ENCODE measurements at regions of chr10 and their contacts with region 1.

Region 1: DNA sequence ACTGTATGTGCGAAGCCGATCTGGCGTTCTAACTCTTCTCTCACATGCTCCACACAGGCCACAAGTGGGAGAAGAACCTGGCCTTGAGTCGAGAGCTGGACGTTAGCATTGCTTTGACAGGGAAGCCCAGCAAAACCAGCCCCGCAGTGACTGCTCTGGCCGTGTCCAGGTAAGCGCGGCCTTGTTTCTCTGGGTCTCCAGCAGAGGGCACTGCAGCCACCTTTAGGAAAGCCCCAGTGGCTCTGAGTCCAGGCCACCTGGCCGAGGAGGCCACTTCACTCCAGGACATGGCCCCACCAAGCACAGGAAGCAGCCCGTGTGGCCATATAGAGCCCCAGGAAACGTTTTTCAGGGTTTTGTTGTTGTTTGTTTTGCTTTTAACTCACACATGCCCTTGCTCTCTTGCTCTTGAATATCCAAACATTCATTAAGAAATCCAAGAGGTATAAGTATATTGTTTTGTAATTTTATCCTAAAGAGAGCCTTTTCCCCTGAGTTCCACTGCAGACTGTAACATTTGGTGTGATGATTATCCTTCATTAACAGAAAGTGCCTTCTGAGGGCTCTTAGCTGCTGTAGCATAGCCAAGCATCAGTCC is 41.8 kb upstream of the LRRC18 start:
- DNase-seq: peak; percentile 83

Region 2: DNA sequence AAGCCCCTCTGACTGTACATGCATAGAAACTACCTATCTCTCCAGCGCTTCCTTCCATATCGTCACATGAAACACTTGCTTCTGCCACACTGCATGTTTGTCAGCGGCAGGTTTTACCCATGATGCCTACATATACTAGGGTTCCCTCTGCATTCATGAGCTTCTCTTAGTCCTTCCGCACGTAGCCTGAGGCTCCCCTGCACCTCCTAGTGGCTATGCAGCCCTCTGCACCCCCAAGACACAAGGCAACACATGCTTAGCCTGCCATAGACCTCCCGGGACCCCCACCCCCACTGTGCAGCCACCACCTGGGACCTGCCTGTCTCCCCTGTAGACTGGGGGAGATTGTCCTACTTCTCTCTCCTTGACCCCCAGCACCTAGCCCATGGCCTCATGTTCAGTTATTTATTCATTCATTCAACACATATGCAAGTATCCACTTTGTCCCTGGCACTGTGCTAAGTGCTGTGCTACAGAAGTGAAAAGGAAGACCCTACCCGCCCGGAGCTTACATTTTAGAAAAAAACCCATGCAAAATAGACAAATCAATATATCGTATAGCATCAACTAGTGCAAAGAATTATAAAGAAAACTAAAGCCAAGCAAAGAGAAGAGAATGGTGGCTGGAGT is 183.3 kb after region 1 on chr10:
- intact Hi-C with region 1: loop called (anchors 2 kb)
- DNase-seq: no peak

Region 3: DNA sequence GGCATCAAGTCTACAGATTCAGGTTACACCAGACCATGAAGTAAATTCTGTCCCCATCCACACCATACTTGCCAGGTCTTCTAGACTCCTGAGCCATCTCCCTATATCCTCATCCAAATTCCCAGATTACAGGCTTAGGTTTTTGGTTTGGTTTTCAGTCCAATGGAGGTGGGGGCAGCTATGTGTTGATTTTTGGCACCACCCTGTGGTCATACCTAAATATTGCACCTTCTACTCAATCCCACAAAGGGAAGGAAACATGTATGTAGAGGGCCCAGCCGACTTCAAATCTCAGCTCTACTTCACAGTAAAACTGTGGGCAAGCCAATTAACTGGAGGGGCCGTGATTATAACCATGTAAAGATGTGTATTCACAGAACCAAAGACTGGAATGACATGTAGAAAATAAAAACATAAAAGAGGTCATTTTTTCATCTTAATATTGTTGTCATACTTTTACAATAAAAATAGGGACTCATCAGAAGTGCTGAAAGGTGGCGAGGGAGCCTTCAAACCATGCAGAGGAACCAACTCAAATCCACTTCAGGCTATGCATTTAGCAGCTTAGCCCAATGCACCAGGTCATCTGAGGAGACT is 537.7 kb after region 1 on chr10:
- intact Hi-C with region 1: loop called (anchors 5 kb)
- DNase-seq: no peak

Measured in cardiac septum (tissue), 1 donor.